ENCODE measurements at regions of chr11 and their contacts with region 1.

Region 1: GRCh38 chr11:121451986-121452608 is at the start of gene SORL1:
- DNase-seq: peak; percentile 64 to 81 (median 69)
- H3K4me3 ChIP-seq: peak within 1 kb of the TSS; percentile 77 to 98 (median 95)
- H3K27ac ChIP-seq: peak within 1 kb of the TSS in 1 of 2 experiments; percentile 44
- H3K4me1 ChIP-seq: peaks cover 47 to 77% (median 72%) of the 10 kb centered on the region in 4 experiments
- H3K27me3 ChIP-seq: no peaks in the 10 kb centered on the region

Region 2: DNA sequence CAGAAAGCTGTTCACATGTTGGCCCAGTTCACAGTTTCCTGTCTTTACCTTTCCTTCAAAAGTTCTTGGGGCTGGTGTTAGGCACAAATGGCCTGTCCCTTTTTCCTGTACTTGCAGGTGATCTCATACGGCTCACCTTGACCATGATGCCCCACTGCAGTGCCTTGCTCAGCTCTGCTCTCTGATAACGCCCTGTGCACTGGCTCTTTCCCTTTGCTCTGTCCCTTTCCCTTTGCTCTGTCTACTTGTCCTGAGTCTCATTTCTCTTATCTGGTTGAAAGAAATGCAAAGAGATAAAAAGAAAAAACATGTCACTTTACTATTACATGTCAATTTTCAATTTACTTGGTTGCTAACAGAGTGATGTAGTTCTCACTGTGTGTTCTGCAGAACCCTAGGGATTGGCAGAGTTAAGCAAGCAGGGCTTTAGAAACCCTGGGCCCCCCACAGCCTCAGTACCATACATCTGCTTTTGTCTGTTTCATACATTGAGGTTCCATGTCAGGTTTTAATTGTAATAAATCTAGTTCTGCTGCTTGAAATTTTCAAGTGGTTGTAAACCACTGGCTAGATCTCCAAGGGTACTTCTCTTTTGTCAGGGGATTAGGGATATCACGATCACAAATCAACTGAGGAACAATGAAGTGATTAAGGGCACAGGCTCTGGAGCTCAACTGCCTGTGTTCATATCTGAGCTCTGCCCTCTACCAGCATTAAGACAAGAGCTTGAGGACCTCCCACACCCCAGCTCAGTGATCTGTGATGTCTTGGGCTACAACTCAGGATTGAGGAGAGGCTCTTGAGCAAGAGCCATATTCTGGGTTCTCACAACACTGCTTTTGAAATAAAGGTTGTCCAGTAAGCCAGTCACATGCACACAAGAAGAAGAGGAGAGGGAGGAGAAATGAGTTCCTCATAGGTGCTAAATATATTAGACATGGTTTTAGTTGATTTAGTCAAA is 16.3 kb before region 1 on chr11:
- CTCF ChIA-PET with region 1: interaction called, 10 read pairs
- POLR2A ChIA-PET with region 1: interaction called, 4 read pairs
- DNase-seq: peak in 2 of 3 donors; percentile 24 to 31
- H3K4me3 ChIP-seq: no peak overlapping the region
- H3K27ac ChIP-seq: no peak overlapping the region
- H3K4me1 ChIP-seq: peaks cover 12 to 40% (median 21%) of the 10 kb centered on the region in 4 experiments
- H3K27me3 ChIP-seq: no peaks in the 10 kb centered on the region

Region 3: GRCh38 chr11:121464352-121464946 is 12.4 kb after region 1 on chr11:
- CTCF ChIA-PET with region 1: interaction called, 50 read pairs
- POLR2A ChIA-PET with region 1: interaction called, 4 read pairs
- DNase-seq: peak; percentile 84 to 98 (median 97)
- H3K4me3 ChIP-seq: peak overlapping the region in 2 of 7 experiments; percentile 5 to 50
- H3K27ac ChIP-seq: peak overlapping the region in 1 of 2 experiments; percentile 52
- H3K4me1 ChIP-seq: peaks cover 18 to 73% (median 62%) of the 10 kb centered on the region in 4 experiments
- H3K27me3 ChIP-seq: no peaks in the 10 kb centered on the region

Region 4: GRCh38 chr11:121482231-121483129 is 30.4 kb after region 1 on chr11:
- CTCF ChIA-PET with region 1: interaction called, 11 read pairs
- POLR2A ChIA-PET with region 1: no interaction called
- DNase-seq: peak; percentile 72 to 94 (median 91)
- H3K4me3 ChIP-seq: peak overlapping the region in 4 of 7 experiments; percentile 2 to 56 (median 44)
- H3K27ac ChIP-seq: peak overlapping the region; percentile 52 to 74
- H3K4me1 ChIP-seq: peaks cover 25 to 61% (median 61%) of the 10 kb centered on the region in 4 experiments
- H3K27me3 ChIP-seq: no peaks in the 10 kb centered on the region

Region 5: DNA sequence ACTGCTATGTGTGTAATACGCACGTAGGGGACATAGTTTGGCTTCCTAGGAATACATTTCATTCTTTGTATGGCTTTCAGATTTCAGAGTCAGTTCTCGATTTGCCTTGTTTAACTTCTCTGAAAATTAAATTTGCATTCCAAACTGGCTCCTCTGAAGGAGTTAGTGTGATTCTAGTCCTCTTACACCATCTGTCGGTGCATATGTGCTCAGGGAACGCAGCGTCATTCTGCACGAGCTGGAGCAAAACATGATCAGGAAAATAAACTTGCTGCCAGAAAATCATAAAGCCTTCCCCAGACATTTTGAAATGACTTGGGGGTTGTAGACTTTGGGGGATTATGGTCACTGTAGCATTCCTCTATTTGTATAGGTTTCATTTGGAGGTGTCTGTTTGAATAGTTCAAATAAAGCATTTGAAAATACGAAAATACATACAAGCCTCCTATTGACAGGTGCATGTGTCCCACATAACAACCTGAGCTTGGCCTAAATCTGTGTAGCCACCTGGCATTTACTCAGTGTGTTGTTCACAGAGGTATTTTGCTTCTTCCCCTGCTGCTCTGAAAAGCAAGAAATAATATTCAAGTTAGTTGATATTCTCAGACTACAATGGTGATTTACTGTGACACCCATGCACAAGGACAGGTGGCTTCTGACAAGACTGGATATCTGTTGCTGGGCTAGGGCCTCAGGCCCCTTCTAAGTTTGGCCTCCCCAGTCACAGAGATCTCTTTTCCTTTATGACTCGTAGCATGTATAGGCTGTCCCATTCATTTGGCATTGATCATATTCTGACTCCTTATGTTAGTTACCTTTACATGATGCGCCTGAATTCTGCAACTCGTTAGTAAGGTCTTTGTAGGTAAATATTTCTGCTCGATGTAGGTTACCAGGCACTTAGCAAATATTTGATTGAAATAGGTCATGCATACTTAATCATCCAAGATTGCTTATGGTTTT is 82.3 kb after region 1 on chr11:
- CTCF ChIA-PET with region 1: interaction called, 19 read pairs
- POLR2A ChIA-PET with region 1: no interaction called
- DNase-seq: peak; percentile 50 to 74 (median 73)
- H3K4me3 ChIP-seq: no peak overlapping the region
- H3K27ac ChIP-seq: no peak overlapping the region
- H3K4me1 ChIP-seq: peaks cover 6 to 10% (median 9%) of the 10 kb centered on the region in 4 experiments
- H3K27me3 ChIP-seq: no peaks in the 10 kb centered on the region

Region 6: GRCh38 chr11:121544956-121545355 is 92.9 kb after region 1 on chr11:
- CTCF ChIA-PET with region 1: no interaction called
- POLR2A ChIA-PET with region 1: no interaction called
- DNase-seq: peak in 2 of 3 donors; percentile 43 to 49
- H3K4me3 ChIP-seq: peak overlapping the region in 1 of 7 experiments; percentile 34
- H3K27ac ChIP-seq: no peak overlapping the region
- H3K4me1 ChIP-seq: peaks cover 3 to 30% (median 13%) of the 10 kb centered on the region in 4 experiments
- H3K27me3 ChIP-seq: no peaks in the 10 kb centered on the region

Region 7: DNA sequence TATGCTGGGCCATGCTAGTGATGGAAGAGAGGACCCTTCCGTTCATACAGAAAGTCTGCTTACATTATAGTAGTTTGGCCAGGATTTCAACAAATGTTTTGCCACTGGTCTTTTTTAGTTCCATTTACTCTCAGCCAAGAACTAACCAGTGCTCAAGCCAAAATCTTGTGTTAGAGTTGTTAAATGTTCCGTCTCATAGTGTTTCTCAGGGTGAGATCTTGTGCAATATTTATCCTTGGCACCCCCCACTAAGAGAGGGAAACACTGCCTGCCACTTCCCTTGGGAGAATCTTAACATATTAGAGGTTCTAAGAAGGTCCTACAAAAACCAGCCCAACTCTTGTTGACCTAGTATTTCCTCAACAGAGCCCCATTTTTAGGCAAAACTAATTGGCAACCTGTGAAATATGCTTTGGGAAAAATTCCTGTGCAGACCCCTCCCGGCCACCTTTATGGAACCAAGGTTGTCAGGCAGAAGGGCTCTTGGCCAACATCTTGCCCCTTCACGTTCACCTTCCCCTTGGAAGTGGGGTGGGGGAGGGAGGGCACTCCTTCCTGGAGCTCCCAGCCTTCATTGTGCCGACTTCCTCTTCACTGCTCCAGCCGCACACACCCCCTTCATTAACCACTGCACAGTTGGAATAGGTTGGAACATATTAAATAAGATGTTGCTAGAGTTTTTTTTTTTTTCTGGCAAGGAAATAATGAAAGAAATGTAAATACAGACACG is 173.8 kb after region 1 on chr11:
- CTCF ChIA-PET with region 1: no interaction called
- POLR2A ChIA-PET with region 1: no interaction called
- DNase-seq: no peak
- H3K4me3 ChIP-seq: no peak overlapping the region
- H3K27ac ChIP-seq: no peak overlapping the region
- H3K4me1 ChIP-seq: no peaks in the 10 kb centered on the region
- H3K27me3 ChIP-seq: no peaks in the 10 kb centered on the region